ENCODE measurements at regions of chr17 and their contacts with region 1.

Region 1: GRCh38 chr17:80559825-80560251 is 15.2 kb downstream of the RPTOR start:
- DNase-seq: no peak
- H3K4me3 ChIP-seq: no peak overlapping the region
- H3K27ac ChIP-seq: no peak overlapping the region
- H3K4me1 ChIP-seq: no peaks in the 10 kb centered on the region
- H3K27me3 ChIP-seq: no peaks in the 10 kb centered on the region
- CTCF ChIP-seq: no peak
- EP300 ChIP-seq: no peak
- POLR2A ChIP-seq: no peak

Region 2: GRCh38 chr17:80439499-80439898 is 120.3 kb before region 1 on chr17:
- in situ Hi-C with region 1: no loop called
- intact Hi-C with region 1: loop called (anchors 5 kb)
- DNase-seq: no peak
- H3K4me3 ChIP-seq: no peak overlapping the region
- H3K27ac ChIP-seq: no peak overlapping the region
- H3K4me1 ChIP-seq: no peaks in the 10 kb centered on the region
- H3K27me3 ChIP-seq: no peaks in the 10 kb centered on the region
- CTCF ChIP-seq: no peak
- EP300 ChIP-seq: no peak
- POLR2A ChIP-seq: no peak

Region 3: DNA sequence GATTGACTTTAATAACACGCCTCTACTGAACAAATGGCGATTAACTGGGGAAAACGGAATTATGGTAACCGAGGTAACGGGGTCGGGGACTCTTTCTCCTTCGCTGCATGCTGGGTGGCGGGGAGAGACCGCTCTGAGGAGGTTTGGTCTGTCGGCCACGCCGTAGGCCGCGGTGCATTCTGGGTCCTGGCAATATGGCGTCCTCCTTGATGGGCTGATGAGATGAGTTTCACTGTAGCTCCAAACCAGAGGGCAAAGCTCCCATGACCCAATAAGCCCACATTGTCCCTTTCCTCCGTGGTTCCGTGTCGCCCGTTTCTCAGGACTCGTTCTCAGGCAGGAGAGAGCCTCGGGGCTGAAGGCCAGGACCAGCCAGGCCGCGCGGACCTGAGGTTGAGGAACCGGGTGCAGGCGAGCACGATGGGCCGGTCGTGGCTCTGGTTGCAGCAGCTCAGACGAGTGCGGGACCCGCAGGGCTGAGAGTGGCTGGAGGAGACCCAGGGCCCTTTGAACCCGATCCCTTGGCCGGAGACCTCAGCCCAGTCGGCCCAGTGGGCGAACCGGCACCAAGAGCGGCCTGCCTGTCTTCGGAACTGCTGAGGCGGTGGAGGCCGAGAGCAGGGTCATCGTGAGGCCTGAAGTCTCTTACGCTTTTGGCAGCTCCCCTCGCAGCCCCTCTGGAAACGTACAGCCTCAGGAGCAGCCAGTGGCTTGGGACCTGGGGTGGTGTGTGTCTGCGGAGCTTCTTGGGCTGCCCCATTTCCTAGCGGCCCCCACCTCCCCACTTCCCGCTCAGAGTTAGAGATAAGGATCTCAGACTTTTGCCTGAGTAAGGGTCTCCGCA is 15.0 kb before region 1 on chr17 and contains the start of gene RPTOR:
- in situ Hi-C with region 1: no loop called
- intact Hi-C with region 1: no loop called
- DNase-seq: peak; percentile 94
- H3K4me3 ChIP-seq: peak within 1 kb of the TSS; percentile 69 to 96 (median 90)
- H3K27ac ChIP-seq: peak within 1 kb of the TSS; percentile 75 to 91 (median 85)
- H3K4me1 ChIP-seq: peaks cover 12 to 36% (median 15%) of the 10 kb centered on the region in 4 donors
- H3K27me3 ChIP-seq: peaks cover 20% of the 10 kb centered on the region
- CTCF ChIP-seq: no peak
- EP300 ChIP-seq: no peak
- POLR2A ChIP-seq: peak; percentile 35
- total RNA-seq, gene RPTOR: 28.9 to 79.3 (median 48.0) TPM

Measured in transverse colon (tissue), 4 donors.